ENCODE measurements at regions of chr3 and their contacts with region 1.

Region 1: GRCh38 chr3:121545574-121546455 is at the start of gene POLQ:
- DNase-seq: peak; percentile 92
- ATAC-seq: peak; percentile 94
- H3K4me3 ChIP-seq: peak within 1 kb of the TSS; percentile 96 to 99
- H3K27ac ChIP-seq: peak within 1 kb of the TSS; percentile 48
- H3K4me1 ChIP-seq: peaks cover 0 to 11% of the 10 kb centered on the region in 2 experiments; a peak in 3 of 4 replicates
- H3K27me3 ChIP-seq: no peaks in the 10 kb centered on the region
- CTCF ChIP-seq: no peak
- POLR2A ChIP-seq: peak; percentile 39
- RAD21 ChIP-seq: no peak
- total RNA-seq, gene POLQ: 12.3 TPM

Region 2: DNA sequence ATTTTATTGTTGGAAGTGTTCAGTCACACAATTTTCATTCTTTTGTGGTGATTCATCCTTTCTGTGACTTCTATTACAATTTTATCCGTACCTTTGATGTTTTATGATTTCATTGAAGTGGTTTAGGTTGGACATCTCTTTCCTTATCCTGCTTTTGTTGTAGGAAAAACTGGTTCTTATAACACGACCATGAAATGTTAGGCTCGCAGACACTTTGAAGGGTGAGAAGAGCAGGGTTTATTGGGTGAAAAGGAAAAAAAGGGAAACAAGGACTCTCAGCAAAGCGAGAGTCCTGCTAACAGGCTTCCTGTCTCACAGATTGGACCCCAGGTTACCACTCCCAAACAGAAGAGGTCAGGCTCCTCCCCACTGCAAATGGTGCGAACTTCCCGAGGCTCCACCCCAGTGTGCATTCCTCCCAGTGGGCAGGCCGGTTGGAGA is 380.4 kb before region 1 on chr3:
- CTCF ChIA-PET with region 1: no interaction called
- POLR2A ChIA-PET with region 1: no interaction called
- RAD21 ChIA-PET with region 1: no interaction called
- intact Hi-C with region 1: no loop called
- DNase-seq: peak; percentile 48
- ATAC-seq: peak; percentile 99
- H3K4me3 ChIP-seq: peak overlapping the region; percentile 14 to 42
- H3K27ac ChIP-seq: 0 out of 2 replicates have a peak overlapping the region, but pooled peaks have one; percentile 12
- H3K4me1 ChIP-seq: peaks cover 10 to 18% of the 10 kb centered on the region in 2 experiments; a peak in 3 of 4 replicates
- H3K27me3 ChIP-seq: no peaks in the 10 kb centered on the region
- CTCF ChIP-seq: no peak
- POLR2A ChIP-seq: peak; percentile 40
- RAD21 ChIP-seq: peak; percentile 19; the same call in 1 of the 2 replicates

Region 3: GRCh38 chr3:121529308-121529707 is 16.5 kb before region 1 on chr3:
- CTCF ChIA-PET with region 1: no interaction called
- POLR2A ChIA-PET with region 1: no interaction called
- RAD21 ChIA-PET with region 1: no interaction called
- intact Hi-C with region 1: no loop called
- DNase-seq: no peak
- ATAC-seq: no peak
- H3K4me3 ChIP-seq: no peak overlapping the region
- H3K27ac ChIP-seq: no peak overlapping the region
- H3K4me1 ChIP-seq: no peaks in the 10 kb centered on the region
- H3K27me3 ChIP-seq: no peaks in the 10 kb centered on the region
- CTCF ChIP-seq: peak; percentile 26 to 54 (median 47); a peak in 5 of 6 replicates
- POLR2A ChIP-seq: no peak
- RAD21 ChIP-seq: peak; percentile 40

Region 4: GRCh38 chr3:121995161-121996137 is 449.6 kb after region 1 on chr3:
- CTCF ChIA-PET with region 1: interaction called, 14 read pairs
- POLR2A ChIA-PET with region 1: no interaction called
- RAD21 ChIA-PET with region 1: interaction called, 3 to 4 read pairs
- intact Hi-C with region 1: loop called (anchors 5 kb)
- DNase-seq: peak; percentile 53
- ATAC-seq: peak; percentile 100
- H3K4me3 ChIP-seq: no peak overlapping the region
- H3K27ac ChIP-seq: no peak overlapping the region
- H3K4me1 ChIP-seq: peaks cover 0 to 15% of the 10 kb centered on the region in 2 experiments; a peak in 3 of 4 replicates
- H3K27me3 ChIP-seq: no peaks in the 10 kb centered on the region
- CTCF ChIP-seq: peak; percentile 80 to 82 (median 82)
- POLR2A ChIP-seq: no peak
- RAD21 ChIP-seq: peak; percentile 66

Region 5: DNA sequence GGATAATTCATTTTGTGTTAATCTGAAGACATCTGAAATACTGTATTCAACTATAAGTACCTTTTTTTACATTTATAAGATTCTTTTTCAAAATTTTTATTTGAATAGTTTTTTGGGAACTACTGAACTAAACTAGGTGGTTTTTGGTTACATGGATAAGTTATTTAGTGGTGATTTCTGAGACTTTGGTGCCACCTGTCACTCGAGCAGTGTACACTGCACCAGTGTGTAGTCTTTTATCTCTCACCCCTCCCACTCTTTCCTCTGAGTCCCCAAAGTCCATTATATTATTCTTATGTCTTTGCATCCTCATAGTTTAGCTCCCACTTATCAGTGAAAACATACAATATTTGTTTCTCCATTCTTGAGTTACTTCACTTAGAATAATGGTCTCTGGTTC is 566.9 kb after region 1 on chr3:
- CTCF ChIA-PET with region 1: no interaction called
- POLR2A ChIA-PET with region 1: no interaction called
- RAD21 ChIA-PET with region 1: no interaction called
- intact Hi-C with region 1: loop called (anchors 5 kb)
- DNase-seq: no peak
- ATAC-seq: 0 out of 2 replicates have a peak, but pooled peaks have one; percentile 46
- H3K4me3 ChIP-seq: no peak overlapping the region
- H3K27ac ChIP-seq: no peak overlapping the region
- H3K4me1 ChIP-seq: no peaks in the 10 kb centered on the region
- H3K27me3 ChIP-seq: no peaks in the 10 kb centered on the region
- CTCF ChIP-seq: no peak
- POLR2A ChIP-seq: no peak
- RAD21 ChIP-seq: peak; percentile 32

Region 6: GRCh38 chr3:122305818-122306621 is 760.2 kb after region 1 on chr3:
- CTCF ChIA-PET with region 1: no interaction called
- POLR2A ChIA-PET with region 1: no interaction called
- RAD21 ChIA-PET with region 1: interaction called in 1 of 2 experiments, 4 read pairs
- intact Hi-C with region 1: loop called (anchors 5 kb)
- DNase-seq: peak; percentile 23
- ATAC-seq: peak; percentile 93
- H3K4me3 ChIP-seq: no peak overlapping the region
- H3K27ac ChIP-seq: no peak overlapping the region
- H3K4me1 ChIP-seq: 0 out of 4 replicates have a peak, but pooled peaks cover 0 to 3% of the 10 kb centered on the region in 2 experiments
- H3K27me3 ChIP-seq: no peaks in the 10 kb centered on the region
- CTCF ChIP-seq: peak; percentile 40 to 54 (median 49); a peak in 5 of 6 replicates
- POLR2A ChIP-seq: no peak
- RAD21 ChIP-seq: peak; percentile 63

Region 7: GRCh38 chr3:122679085-122679881 is 1133.5 kb after region 1 on chr3:
- CTCF ChIA-PET with region 1: no interaction called
- POLR2A ChIA-PET with region 1: no interaction called
- RAD21 ChIA-PET with region 1: no interaction called
- intact Hi-C with region 1: loop called (anchors 2 kb)
- DNase-seq: peak; percentile 72
- ATAC-seq: peak; percentile 73
- H3K4me3 ChIP-seq: peak overlapping the region; percentile 77 to 85
- H3K27ac ChIP-seq: peak overlapping the region; percentile 68
- H3K4me1 ChIP-seq: peaks cover 13 to 29% of the 10 kb centered on the region in 2 experiments; a peak in 3 of 4 replicates
- H3K27me3 ChIP-seq: no peaks in the 10 kb centered on the region
- CTCF ChIP-seq: peak; percentile 69 to 91 (median 78)
- POLR2A ChIP-seq: no peak
- RAD21 ChIP-seq: peak; percentile 95

Region 8: DNA sequence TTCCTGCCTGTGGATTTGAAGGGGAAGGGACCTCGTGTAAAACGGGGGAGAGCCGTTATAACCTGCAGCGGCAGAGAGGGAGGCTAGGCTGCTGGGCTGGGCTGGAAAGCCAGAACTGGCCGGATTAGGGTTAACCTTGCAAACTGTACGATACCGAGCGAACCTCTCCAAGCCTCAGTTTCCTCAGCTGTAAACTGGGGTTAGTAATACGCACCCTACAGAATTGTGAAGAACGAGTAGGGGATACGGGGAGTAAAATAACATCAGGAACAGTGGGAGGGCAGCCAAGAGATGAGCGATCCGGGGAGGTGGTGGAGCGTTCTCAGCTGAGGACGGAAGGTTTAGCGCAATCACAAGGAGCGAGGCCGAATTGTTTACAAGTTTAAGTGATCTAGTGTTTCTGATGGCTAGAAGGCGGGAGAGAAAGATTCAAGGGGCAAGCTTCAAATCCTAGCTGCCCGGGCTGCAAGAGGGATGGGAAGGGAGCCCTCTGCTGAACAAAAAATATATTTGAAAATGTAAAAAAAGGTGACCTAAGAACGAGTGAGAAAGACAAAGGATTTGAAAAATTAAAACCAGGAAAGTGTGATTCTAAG is 1482.5 kb after region 1 on chr3:
- CTCF ChIA-PET with region 1: no interaction called
- POLR2A ChIA-PET with region 1: no interaction called
- RAD21 ChIA-PET with region 1: no interaction called
- intact Hi-C with region 1: loop called (anchors 5 kb)
- DNase-seq: peak; percentile 43
- ATAC-seq: peak; percentile 67
- H3K4me3 ChIP-seq: peak overlapping the region; percentile 40 to 58
- H3K27ac ChIP-seq: no peak overlapping the region
- H3K4me1 ChIP-seq: peaks cover 4 to 16% of the 10 kb centered on the region in 2 experiments; a peak in 3 of 4 replicates
- H3K27me3 ChIP-seq: peaks cover 24% of the 10 kb centered on the region; the same call in 1 of the 2 replicates
- CTCF ChIP-seq: peak; percentile 43 to 83 (median 55)
- POLR2A ChIP-seq: no peak
- RAD21 ChIP-seq: peak; percentile 80